Common myeloid progenitor, CD34-positive (primary cell): ENCODE measurements at regions of chr5 and their contacts with region 1.

Region 1: DNA sequence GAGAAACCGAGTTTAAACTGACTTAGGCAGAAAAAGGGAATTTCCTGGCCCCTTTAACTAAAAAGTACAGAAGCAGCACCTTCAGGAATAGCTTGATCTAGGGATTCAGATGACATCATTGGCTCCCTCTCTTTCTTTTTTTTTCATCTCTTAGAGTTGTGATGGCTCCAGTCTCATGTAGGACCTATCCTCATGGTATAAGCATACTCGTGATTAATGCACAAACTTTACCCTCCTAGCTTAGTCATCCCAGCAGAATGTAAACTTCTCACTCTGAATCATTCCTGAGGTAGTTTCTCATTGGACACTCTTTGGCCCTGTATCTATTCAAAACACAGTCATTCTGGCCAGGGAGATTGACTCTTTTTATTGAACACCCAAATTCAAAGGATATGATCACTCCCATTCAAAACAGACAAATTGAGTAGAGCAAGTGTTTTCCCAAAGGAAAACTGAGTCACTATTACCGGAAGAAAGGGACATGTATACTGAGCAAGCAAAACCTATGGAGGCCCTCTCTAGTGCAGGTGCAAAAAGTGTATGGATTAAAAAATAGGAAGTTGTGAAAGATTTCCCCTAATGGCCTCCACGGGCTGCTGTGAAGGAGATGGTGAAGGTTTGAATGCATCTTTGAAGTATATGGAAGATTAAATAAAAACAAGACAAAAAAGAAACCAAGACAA is 27.6 kb upstream of the SMIM23 start:
- DNase-seq: no peak
- H3K4me3 ChIP-seq: no peak overlapping the region
- H3K27ac ChIP-seq: no peak overlapping the region
- H3K4me1 ChIP-seq: no peaks in the 10 kb centered on the region
- H3K27me3 ChIP-seq: no peaks in the 10 kb centered on the region

Region 2: DNA sequence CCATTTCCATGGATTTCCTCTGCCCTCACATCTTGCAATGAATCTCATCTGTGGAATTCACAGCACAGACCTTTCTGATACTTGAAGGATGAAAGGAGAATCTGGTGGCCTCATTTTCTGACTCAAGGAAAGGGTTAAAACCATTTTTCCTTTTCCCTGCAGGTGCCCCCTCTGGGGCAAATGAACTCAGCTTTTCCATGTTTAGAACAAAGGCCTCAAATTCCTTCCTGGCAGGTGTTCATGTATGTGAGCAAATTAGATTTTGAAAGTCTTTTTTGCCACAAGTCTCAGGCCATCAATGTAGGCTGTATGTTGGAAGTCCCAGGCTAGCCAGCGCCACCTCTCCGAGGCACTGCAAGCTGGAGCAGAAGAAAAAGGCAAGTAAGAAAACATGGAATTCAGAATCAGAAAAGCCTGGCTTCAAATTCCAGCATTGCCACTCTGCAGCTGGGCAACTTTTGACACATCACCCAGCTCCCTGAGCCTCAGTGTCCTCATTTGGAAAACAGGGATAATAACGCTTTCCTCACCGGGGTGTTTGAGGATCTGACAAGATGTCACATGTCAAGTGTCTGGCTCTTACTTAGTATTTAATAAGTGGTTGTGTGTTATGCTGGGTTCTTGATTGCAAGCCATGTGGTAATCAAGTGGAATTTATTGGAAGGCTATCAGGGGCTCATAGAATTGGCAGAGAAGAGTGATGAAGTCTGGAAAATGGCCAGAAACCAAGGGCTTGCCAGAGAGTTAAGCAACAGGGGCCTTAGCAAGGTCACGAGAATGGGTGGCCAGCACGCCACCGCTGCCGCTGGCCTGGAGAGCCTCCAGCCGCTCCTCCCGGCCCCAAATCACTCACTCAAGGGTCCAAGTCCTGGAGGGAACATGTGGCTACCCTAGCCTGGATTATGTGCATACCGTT is 20.8 kb before region 1 on chr5:
- CTCF ChIA-PET with region 1: no interaction called
- POLR2A ChIA-PET with region 1: no interaction called
- DNase-seq: no peak
- H3K4me3 ChIP-seq: no peak overlapping the region
- H3K27ac ChIP-seq: no peak overlapping the region
- H3K4me1 ChIP-seq: no peaks in the 10 kb centered on the region
- H3K27me3 ChIP-seq: no peaks in the 10 kb centered on the region

Region 3: GRCh38 chr5:171747061-171747859 is 10.7 kb before region 1 on chr5:
- CTCF ChIA-PET with region 1: interaction called, 10 read pairs
- POLR2A ChIA-PET with region 1: no interaction called
- DNase-seq: no peak
- H3K4me3 ChIP-seq: no peak overlapping the region
- H3K27ac ChIP-seq: no peak overlapping the region
- H3K4me1 ChIP-seq: peaks cover 0 to 2% (median 0%) of the 10 kb centered on the region in 4 experiments
- H3K27me3 ChIP-seq: peaks cover 0 to 2% (median 0%) of the 10 kb centered on the region in 5 experiments